ENCODE measurements at regions of chr1 and their contacts with region 1.

Region 1: GRCh38 chr1:31394628-31395193 is 18.3 kb upstream of the SERINC2 start:
- DNase-seq: peak; percentile 85
- ATAC-seq: peak; percentile 97
- H3K4me3 Mint-ChIP-seq: peak overlapping the region; percentile 77
- H3K27ac Mint-ChIP-seq: peak overlapping the region; percentile 70
- H3K4me1 Mint-ChIP-seq: peaks cover 13% of the 10 kb centered on the region
- H3K27me3 Mint-ChIP-seq: peaks cover 8% of the 10 kb centered on the region

Region 2: DNA sequence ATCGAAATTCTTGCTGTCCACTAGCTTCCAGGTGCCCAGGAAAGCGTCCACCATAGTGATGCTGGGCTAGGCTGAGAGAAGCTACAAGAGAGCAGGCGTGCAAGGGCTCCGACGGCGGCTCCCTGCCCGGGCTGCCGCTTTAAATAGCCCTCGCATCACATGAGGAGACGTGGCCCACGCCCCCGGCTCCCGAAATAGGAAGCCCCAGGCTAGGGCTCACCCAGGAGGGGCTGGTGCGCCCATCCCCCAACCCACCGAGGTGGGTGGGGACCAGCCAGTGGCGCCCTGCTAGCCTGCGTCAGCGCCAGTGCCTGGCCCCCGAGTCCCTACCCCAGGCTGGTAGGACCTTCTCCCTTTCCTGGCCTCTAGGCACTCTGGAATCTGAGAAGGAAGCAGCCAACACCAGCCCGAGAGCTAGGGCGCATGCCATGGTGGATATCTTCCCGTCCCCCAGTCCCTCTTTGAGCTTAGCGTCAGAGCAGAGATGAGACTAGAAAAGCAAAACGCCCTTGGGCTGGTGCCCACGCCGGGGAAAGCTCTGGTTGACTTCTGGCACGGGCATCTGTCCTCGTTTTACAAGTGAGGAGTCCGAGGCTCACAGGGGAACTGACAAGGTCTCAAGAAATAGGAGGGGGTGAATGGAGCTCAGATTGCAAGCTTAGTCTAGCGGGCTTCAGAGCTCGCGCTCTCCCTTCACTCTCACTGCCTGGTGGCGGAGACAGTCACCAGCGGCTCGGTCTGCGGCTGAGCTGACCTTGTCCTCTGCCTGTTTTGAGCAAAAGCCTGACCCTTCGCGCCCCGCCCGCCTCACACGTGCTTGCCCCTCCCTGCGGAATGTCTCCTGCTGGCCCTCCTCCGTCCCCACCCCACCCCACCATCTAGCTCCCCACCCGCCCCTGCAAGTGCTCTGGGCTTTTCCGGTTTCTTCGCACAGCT is 21.5 kb before region 1 on chr1 and contains the start of gene FABP3:
- CTCF ChIA-PET with region 1: interaction called, 24 read pairs
- DNase-seq: peak; percentile 50
- ATAC-seq: peak; percentile 69
- H3K4me3 Mint-ChIP-seq: peak within 1 kb of the TSS; percentile 56
- H3K27ac Mint-ChIP-seq: no peak within 1 kb of the TSS
- H3K4me1 Mint-ChIP-seq: peaks cover 14% of the 10 kb centered on the region
- H3K27me3 Mint-ChIP-seq: no peaks in the 10 kb centered on the region
- total RNA-seq, gene FABP3: not detected

Region 3: DNA sequence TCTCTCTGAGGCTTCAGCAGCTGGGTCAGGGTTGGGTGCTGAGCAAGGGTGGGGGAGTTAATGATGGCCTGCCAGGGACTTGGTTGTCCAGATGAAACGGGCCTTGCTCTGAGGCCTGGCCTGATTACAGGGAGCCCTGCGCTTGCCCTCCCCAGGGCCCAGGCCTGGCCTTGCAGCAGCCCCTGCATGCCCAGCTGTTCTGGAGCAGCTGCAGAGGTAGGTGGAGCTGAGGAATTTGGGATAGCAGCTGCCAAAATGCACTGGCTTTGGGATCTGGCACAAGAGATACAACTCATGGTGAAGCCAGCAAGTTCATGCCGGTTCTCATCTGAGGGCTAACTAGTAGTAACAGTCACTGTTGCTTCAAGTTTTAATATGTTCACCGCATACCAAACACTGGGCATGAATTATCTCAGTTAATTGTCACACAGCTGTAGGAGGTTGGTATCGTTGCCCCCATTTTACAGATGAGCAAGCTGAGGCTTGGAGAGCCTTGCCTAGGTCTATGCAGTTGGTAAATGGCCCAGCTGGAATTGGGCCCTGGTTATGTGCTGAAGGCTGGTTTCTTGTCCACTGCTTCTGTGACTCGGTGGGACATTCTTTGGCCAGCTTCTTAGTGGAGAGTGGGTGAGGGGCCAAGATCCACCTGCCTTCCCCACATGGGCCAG is 11.0 kb after region 1 on chr1:
- CTCF ChIA-PET with region 1: interaction called, 12 read pairs
- DNase-seq: no peak
- ATAC-seq: no peak
- H3K4me3 Mint-ChIP-seq: no peak overlapping the region
- H3K27ac Mint-ChIP-seq: no peak overlapping the region
- H3K4me1 Mint-ChIP-seq: peaks cover 1% of the 10 kb centered on the region
- H3K27me3 Mint-ChIP-seq: peaks cover 13% of the 10 kb centered on the region

Region 4: DNA sequence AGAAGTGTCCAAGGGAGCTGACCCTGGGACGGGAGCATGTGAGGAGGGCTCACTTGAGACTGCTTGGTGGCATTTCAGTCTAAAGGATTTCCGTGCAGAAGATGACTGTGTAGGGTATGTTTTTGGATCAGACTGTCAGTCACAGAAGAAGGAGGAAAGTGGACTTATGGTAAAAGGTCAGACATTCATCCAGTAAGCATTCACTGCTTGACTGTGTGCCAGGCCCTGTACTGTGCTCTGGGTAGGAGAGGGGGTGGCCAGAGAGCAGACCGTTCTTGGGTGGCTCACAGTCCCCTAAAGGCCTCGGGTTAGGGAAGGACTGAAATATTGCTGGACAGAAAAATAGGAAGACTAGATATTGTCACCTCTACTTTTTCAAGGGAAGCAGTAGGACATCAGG is 16.2 kb after region 1 on chr1:
- CTCF ChIA-PET with region 1: interaction called, 12 read pairs
- DNase-seq: no peak
- ATAC-seq: no peak
- H3K4me3 Mint-ChIP-seq: no peak overlapping the region
- H3K27ac Mint-ChIP-seq: no peak overlapping the region
- H3K4me1 Mint-ChIP-seq: peaks cover 9% of the 10 kb centered on the region
- H3K27me3 Mint-ChIP-seq: peaks cover 58% of the 10 kb centered on the region

Region 5: GRCh38 chr1:31422505-31423319 is 28.0 kb after region 1 on chr1:
- CTCF ChIA-PET with region 1: interaction called, 88 read pairs
- DNase-seq: peak; percentile 79
- ATAC-seq: peak; percentile 70
- H3K4me3 Mint-ChIP-seq: no peak overlapping the region
- H3K27ac Mint-ChIP-seq: no peak overlapping the region
- H3K4me1 Mint-ChIP-seq: peaks cover 8% of the 10 kb centered on the region
- H3K27me3 Mint-ChIP-seq: peaks cover 22% of the 10 kb centered on the region

Region 6: GRCh38 chr1:31447198-31447597 is 52.5 kb after region 1 on chr1:
- CTCF ChIA-PET with region 1: no interaction called
- DNase-seq: no peak
- ATAC-seq: no peak
- H3K4me3 Mint-ChIP-seq: no peak overlapping the region
- H3K27ac Mint-ChIP-seq: no peak overlapping the region
- H3K4me1 Mint-ChIP-seq: no peaks in the 10 kb centered on the region
- H3K27me3 Mint-ChIP-seq: peaks cover 6% of the 10 kb centered on the region

Region 7: DNA sequence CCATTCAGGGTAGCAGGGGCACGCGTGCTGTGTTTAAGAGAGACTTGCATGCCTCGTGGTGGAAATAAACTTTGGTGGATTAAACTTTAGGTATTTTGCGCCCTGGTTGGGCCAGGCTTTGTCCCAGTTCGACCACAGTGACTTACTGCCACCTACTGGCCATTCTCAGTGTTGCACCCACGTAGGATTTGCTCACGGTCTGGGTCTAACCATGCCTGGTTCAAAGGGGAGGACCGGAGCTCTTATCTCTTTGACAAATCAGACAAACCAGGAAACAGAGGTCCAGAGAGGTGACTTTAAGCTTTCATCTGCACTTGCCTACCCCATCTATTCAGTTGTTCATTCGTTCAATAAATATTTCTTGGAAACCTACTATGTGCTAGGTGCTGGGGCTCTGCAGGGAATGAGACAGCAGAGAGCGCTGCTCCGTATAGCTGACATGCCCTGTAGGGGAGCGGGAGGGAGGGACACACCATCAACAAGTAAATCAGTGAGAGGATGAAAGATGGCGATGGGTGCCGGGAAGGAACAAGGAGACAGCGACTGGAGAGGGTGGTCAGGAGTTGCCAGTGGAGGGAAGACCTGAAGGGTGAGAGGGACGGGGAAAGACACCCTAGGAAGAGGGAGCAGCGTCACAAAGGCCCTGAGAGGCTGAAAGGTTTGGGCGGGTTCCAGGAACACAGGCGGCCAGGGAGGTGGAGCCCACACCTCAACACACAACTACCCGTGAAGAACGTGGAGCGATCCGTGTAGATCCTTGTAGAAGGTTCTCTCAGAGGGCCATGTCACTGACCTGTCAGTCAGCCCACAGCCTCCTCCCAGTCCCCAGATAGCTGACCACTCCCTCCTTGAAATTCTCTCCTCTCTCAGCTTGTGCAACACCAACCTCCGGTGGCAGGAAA is 154.4 kb after region 1 on chr1:
- CTCF ChIA-PET with region 1: interaction called, 44 read pairs
- DNase-seq: peak; percentile 92
- ATAC-seq: peak; percentile 89
- H3K4me3 Mint-ChIP-seq: peak overlapping the region; percentile 63
- H3K27ac Mint-ChIP-seq: peak overlapping the region; percentile 51
- H3K4me1 Mint-ChIP-seq: peaks cover 12% of the 10 kb centered on the region
- H3K27me3 Mint-ChIP-seq: peaks cover 16% of the 10 kb centered on the region

Measured in activated CD8-positive, alpha-beta memory T cell treated with anti-CD3 and anti-CD28 coated beads, Interleukin-2, amount 10 ng/mL, durations not matched to agents 7 days and 5 days (primary cell).